Ovary (tissue), 10 donors: ENCODE measurements at regions of chr17 and their contacts with region 1.

Region 1: DNA sequence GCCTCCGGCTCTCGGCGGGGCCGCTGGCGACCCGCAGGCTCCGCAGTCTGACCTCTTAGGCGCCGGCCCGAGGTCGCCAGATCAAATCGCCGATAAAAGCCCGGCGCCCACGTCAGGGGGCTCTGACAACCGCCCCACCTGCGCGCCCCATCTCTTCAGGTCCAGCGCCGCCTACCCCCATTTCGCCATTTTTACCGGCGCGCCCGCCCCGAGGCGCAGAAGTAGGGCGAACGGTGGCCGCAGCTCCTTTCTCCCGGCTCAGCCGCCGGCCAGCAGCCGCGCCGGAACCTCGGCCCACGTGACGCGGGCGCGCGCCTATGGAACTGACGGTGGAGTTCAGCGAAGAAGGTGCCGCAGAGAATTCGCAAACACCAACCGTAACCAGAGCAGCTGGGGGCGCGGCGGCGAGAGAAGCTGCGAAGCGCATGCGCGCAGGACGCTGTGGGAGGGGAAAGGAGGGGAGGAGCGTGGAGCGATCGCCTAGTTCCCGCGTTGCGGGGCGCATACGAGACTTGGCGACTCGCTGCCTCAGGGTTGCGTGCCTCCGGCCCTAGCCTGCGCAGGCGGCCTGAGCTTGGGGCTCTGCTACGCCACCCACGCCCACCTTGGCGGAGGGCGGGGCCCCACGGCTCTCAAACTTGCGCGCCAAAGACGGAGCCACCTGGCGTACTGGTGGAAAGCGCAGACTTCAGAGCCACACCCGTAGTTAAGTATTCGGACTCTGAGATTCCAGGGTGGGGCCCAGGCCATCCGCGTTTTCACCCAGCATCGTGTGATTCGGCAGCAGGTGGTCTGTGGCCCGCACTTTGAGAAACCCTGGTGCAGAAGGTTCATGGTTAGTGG is at the start of gene TRIM37:
- DNase-seq: peak; percentile 97 to 99 (median 98)
- H3K4me3 ChIP-seq: peak within 1 kb of the TSS; percentile 67
- H3K27ac ChIP-seq: peak within 1 kb of the TSS; percentile 63 to 77
- H3K4me1 ChIP-seq: peaks cover 1% of the 10 kb centered on the region
- H3K27me3 ChIP-seq: no peaks in the 10 kb centered on the region
- CTCF ChIP-seq: no peak
- EP300 ChIP-seq: no peak
- POLR2A ChIP-seq: peak; percentile 21
- total RNA-seq, gene TRIM37: 14.2 to 21.8 (median 17.1) TPM

Region 2: GRCh38 chr17:59154721-59155438 is 48.2 kb after region 1 on chr17 and contains the start of gene SKA2:
- intact Hi-C with region 1: loop called in 1 of 4 experiments (anchors 5 kb)
- DNase-seq: peak; percentile 94 to 96 (median 95)
- H3K4me3 ChIP-seq: peak within 1 kb of the TSS; percentile 53
- H3K27ac ChIP-seq: peak within 1 kb of the TSS; percentile 26 to 77
- H3K4me1 ChIP-seq: no peaks in the 10 kb centered on the region
- H3K27me3 ChIP-seq: no peaks in the 10 kb centered on the region
- CTCF ChIP-seq: no peak
- EP300 ChIP-seq: no peak
- POLR2A ChIP-seq: peak; percentile 24
- total RNA-seq, gene SKA2: 15.1 to 41.0 (median 25.5) TPM

Region 3: GRCh38 chr17:59165902-59166342 is 59.2 kb after region 1 on chr17:
- intact Hi-C with region 1: no loop called
- DNase-seq: no peak
- H3K4me3 ChIP-seq: no peak overlapping the region
- H3K27ac ChIP-seq: no peak overlapping the region
- H3K4me1 ChIP-seq: no peaks in the 10 kb centered on the region
- H3K27me3 ChIP-seq: no peaks in the 10 kb centered on the region
- CTCF ChIP-seq: no peak
- EP300 ChIP-seq: no peak
- POLR2A ChIP-seq: no peak